Heart right ventricle (tissue), 16 donors: ENCODE measurements at regions of chr2 and their contacts with region 1.

Region 1: GRCh38 chr2:85826990-85827878 is 61.6 kb downstream of the ST3GAL5 start:
- DNase-seq: peak; percentile 73 to 80
- ATAC-seq: peak; percentile 88 to 97 (median 93)
- H3K4me3 ChIP-seq: peak overlapping the region in 2 of 10 donors; percentile 22 to 31
- H3K27ac ChIP-seq: peak overlapping the region in 1 of 10 donors; percentile 22
- H3K4me1 ChIP-seq: peaks cover 0 to 12% (median 8%) of the 10 kb centered on the region in 9 donors
- H3K27me3 ChIP-seq: peaks cover 0 to 6% (median 0%) of the 10 kb centered on the region in 7 donors
- CTCF ChIP-seq: peak; percentile 83 to 95 (median 94)

Region 2: GRCh38 chr2:85873679-85874078 is 46.4 kb after region 1 on chr2:
- intact Hi-C with region 1: loop called in 1 of 10 experiments (anchors 5 kb)
- DNase-seq: no peak
- ATAC-seq: no peak
- H3K4me3 ChIP-seq: no peak overlapping the region
- H3K27ac ChIP-seq: no peak overlapping the region
- H3K4me1 ChIP-seq: peaks cover 0 to 36% (median 7%) of the 10 kb centered on the region in 9 donors
- H3K27me3 ChIP-seq: peaks cover 0 to 17% (median 0%) of the 10 kb centered on the region in 7 donors
- CTCF ChIP-seq: peak in 2 of 9 donors; percentile 10 to 14